OCI-LY7 (cell line): ENCODE measurements at regions of chr10 and their contacts with region 1.

Region 1: DNA sequence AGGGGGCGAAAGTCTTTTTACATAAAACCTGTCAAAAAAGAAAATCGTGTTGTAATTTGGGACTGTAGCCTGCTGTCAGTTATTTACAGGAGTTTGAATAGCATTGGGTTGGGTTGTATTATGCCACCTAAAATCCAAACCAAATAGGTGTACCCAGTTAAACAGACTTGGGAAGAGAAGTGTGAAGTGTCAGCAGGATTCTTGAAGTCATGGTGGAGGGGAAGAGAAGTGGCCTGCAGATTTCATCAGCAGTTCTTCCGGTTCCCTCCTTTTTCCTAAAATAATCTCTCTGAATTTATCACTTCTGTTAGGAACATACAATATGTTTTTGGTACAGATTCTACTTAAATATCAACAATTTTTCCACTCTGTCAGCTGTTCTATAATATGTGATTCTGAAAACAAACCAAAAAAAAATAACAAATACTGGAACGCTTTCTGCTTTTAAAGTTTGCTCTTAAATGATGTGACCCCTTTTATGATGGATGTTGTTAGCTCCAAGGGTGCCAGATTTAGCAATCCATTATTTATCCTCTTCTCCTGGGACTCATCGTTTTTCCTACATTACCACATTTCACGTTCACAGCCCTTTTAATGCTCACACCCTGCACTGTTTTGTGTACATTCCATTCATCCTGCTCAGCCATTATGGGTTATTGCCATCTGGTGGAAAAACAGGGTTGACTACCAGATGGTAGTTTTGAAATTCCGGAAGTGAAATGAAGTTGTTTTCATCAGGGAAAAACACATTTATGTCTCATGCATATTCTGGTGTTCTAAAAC is 18.7 kb upstream of the ARHGAP12 start:
- DNase-seq: peak; percentile 34
- H3K4me3 ChIP-seq: no peak overlapping the region
- H3K27ac ChIP-seq: no peak overlapping the region
- H3K4me1 ChIP-seq: peaks cover 7% of the 10 kb centered on the region
- CTCF ChIP-seq: peak; percentile 62

Region 2: DNA sequence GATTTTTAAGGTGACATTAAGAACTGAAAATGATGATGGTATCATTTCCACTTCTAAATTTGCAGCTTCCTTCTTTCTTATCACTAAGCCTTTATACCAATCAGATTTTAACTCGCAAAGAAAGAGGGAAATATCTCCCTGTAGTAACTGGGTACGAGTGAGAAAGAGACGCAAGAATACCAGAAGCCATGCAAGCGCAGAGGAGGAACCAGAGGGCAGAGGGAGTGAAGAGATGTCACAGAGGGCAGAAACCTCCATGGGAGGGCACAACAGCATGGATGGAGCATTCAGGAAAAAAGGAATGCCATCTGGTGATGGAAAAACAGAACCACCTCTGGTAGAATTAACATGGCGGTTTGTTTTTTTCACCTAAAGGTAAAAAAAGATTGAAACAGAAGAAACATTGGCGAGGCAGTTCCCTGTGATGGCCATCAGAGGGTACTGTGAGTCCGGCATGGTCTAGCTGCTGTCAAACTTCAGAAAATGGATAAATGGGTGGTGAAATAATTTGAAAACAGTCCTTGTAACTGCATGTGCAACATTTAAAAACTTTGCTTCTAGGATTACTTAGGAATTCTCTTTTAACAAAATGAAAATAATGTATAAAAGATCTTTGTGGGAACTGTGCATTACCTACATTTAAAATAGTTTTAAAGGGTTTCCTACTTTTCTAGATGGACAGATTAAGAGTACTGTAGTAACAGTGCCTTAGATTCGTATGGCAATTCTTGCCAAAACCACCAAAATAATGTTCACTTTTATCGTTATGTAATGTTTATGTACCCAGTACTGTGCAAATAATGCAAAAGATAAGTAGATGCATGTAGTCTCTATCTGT is 110.5 kb before region 1 on chr10:
- CTCF ChIA-PET with region 1: no interaction called
- POLR2A ChIA-PET with region 1: interaction called, 4 read pairs
- intact Hi-C with region 1: loop called (anchors 1 kb)
- DNase-seq: peak; percentile 52
- H3K4me3 ChIP-seq: no peak overlapping the region
- H3K27ac ChIP-seq: no peak overlapping the region
- H3K4me1 ChIP-seq: no peaks in the 10 kb centered on the region
- CTCF ChIP-seq: peak; percentile 85

Region 3: DNA sequence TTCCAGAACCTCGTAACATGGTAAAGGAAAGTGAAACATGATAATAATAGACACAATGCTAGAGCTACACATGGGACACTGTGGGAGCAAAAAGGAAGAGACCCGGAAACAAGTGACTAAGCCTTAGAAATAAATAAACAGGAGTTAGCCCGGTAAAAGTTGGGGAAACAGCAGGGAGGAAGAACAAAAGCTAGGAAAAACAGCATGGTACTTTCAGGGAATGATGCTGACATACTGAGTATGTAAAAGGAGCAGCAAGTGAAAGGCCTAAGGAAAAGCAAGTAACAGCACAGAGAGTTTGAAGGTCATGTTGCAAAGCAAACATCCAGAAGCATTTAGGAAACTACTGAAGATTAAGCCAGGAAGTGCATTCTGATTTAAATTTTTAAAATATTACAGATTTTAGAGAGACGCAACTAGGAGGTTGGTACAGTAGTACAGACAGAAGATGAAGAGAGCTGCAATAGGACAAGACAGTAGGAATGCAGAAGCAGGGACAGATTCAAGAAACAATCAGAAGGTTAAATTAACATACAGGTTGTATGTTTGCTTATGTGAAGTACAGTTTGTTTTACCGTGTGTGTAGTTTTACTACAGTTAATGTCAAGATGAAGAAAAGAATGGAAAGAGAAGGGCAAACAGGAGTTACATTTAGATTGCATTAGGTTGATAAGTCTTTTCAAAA is 82.4 kb before region 1 on chr10:
- CTCF ChIA-PET with region 1: no interaction called
- POLR2A ChIA-PET with region 1: interaction called, 5 read pairs
- intact Hi-C with region 1: loop called (anchors 1 kb)
- DNase-seq: no peak
- H3K4me3 ChIP-seq: no peak overlapping the region
- H3K27ac ChIP-seq: no peak overlapping the region
- H3K4me1 ChIP-seq: peaks cover 7% of the 10 kb centered on the region
- CTCF ChIP-seq: no peak

Region 4: GRCh38 chr10:32139223-32140073 is 192.1 kb after region 1 on chr10:
- CTCF ChIA-PET with region 1: no interaction called
- POLR2A ChIA-PET with region 1: no interaction called
- intact Hi-C with region 1: no loop called
- DNase-seq: no peak
- H3K4me3 ChIP-seq: no peak overlapping the region
- H3K27ac ChIP-seq: no peak overlapping the region
- H3K4me1 ChIP-seq: no peaks in the 10 kb centered on the region
- CTCF ChIP-seq: no peak